Left cardiac atrium (tissue), 4 donors: ENCODE measurements at regions of chr4 and their contacts with region 1.

Region 1: DNA sequence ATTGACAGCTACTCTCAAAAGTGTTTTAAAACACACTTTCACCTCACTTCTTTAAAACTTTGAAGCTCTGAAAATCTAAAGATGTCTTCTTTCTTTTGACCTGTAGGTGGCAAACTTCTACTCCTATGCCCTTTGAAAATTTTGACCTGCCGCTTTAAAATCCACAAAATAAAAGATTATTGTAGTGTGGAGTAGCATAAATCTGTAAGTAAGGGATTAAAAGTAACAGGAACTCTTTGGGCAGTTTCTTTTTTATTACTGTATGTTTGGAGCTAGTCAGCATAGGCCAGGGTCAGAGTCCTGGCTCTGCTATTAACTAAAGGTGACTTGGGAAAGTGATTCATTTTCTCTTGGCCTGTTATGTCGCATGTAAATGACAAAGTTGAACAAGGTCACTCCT is 25.5 kb downstream of the BBS12 start:
- DNase-seq: no peak
- ATAC-seq: peak in 1 of 2 donors; percentile 19

Region 2: DNA sequence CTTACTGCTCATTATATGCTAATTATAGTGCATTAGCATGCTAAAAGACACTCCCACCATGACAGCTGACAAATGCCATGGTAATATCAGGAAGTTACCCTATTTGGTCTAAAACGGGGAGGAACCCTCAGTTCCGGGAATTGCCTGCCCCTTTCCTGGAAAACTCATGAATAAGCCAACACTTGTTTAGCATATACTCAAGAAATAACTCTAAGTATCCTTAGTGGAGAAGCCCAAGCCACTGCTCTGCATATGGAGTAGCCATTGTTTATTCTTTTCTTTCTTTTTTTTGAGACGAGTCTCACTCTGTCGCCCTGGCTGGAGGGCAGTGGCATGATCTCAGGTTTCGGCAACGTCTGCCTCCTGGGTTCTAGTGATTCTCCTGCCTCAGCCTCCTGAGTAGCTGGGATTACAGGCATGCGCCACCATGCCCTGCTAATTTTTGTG is 148.8 kb after region 1 on chr4:
- intact Hi-C with region 1: loop called in 1 of 2 experiments (anchors 5 kb)
- DNase-seq: no peak
- ATAC-seq: no peak

Region 3: DNA sequence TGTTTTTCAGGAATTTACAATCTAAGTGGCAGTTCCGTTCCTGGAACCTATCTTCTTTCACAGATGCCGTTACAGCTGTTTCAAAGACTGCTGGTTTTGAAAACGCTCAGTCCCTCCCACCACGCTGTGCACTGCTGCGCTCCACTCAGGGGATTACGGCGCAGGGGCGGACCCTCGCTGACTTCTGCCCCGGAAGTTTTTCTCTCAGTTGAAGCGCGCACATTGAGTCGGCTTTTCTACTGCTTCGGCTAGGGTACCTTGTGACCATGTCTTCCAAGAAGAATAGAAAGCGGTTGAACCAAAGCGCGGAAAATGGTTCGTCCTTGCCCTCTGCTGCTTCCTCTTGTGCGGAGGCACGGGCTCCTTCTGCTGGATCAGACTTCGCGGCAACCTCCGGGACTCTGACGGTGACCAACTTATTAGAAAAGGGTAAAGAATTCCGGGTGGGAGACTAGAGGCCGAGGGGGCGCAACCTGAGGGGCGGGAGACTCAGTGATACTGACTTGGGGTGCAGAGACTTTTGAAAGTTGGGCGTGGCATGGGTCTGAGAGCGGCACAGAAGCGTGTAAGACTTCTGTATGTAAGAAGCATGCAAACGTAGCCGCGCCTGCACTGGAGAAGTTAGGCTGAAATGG is 165.0 kb after region 1 on chr4:
- intact Hi-C with region 1: loop called in 1 of 2 experiments (anchors 5 kb)
- DNase-seq: peak; percentile 88
- ATAC-seq: peak; percentile 98 to 99